ENCODE measurements at regions of chr1 and their contacts with region 1.

Region 1: GRCh38 chr1:27618341-27619082 is 14.6 kb upstream of the AHDC1 start:
- DNase-seq: peak in 7 of 9 donors; percentile 36 to 63 (median 56)
- ATAC-seq: peak; percentile 89
- H3K4me3 ChIP-seq: peak overlapping the region; percentile 36
- H3K4me3 Mint-ChIP-seq: peak overlapping the region; percentile 8 to 74 (median 54)
- H3K27ac ChIP-seq: peak overlapping the region; percentile 58
- H3K27ac Mint-ChIP-seq: peak overlapping the region in 8 of 9 donors; percentile 72 to 93 (median 86)
- H3K4me1 ChIP-seq: peaks cover 51 to 53% of the 10 kb centered on the region in 2 donors
- H3K4me1 Mint-ChIP-seq: peaks cover 47 to 67% (median 56%) of the 10 kb centered on the region in 7 donors
- H3K27me3 ChIP-seq: no peaks in the 10 kb centered on the region
- H3K27me3 Mint-ChIP-seq: peaks cover 0 to 2% (median 0%) of the 10 kb centered on the region in 5 donors

Region 2: DNA sequence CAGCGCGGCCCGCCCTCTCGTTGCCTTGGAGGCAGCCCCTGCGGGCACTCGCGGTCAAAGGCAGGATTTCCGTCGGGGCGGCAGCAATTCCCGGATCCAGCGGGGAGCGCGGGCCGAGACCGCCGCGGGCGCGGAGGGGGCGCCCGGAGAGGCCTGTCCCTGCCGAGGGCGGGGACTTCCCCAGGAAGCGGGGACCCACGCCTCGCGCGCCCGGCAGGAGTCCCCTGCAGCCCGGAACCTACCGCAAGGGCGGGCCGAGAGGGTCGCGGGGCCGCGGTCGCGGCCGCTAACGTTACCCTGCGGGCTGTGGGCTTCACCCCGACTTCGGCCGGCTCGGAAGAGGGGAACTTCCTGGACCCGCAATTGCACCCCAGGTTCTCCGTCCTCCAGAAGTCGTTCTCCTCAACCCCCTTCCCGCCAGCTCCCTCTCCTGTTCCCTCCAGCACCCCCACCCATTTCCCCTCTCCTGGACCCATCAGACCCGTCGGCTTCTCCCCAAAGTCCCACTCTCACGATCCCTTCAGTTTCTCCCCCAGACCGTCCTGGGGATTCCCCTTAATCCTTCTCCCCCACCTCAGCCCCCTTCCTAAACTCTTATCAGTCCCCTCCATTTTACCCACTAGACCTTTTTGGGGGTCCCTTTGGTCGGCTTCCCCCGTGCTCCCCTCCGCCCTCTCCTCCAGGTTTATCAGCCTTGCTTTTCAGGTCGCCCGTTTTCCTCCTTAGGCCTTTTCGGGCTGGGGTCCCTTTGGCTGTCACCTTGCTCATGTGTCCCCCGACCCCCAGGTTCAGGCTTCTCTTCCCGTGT is 15.9 kb after region 1 on chr1:
- CTCF ChIA-PET with region 1: no interaction called
- POLR2A ChIA-PET with region 1: interaction called, 11 read pairs
- intact Hi-C with region 1: loop called (anchors 1 kb)
- DNase-seq: peak in 6 of 9 donors; percentile 27 to 79 (median 34)
- ATAC-seq: peak; percentile 27
- H3K4me3 ChIP-seq: peak overlapping the region; percentile 50
- H3K4me3 Mint-ChIP-seq: peak overlapping the region; percentile 36 to 82 (median 74)
- H3K27ac ChIP-seq: peak overlapping the region; percentile 51
- H3K27ac Mint-ChIP-seq: peak overlapping the region; percentile 27 to 84 (median 60)
- H3K4me1 ChIP-seq: peaks cover 38 to 52% of the 10 kb centered on the region in 2 donors
- H3K4me1 Mint-ChIP-seq: peaks cover 43 to 81% (median 69%) of the 10 kb centered on the region in 7 donors
- H3K27me3 ChIP-seq: no peaks in the 10 kb centered on the region
- H3K27me3 Mint-ChIP-seq: no peaks in the 10 kb centered on the region

Region 3: GRCh38 chr1:27643701-27644625 is 25.5 kb after region 1 on chr1:
- CTCF ChIA-PET with region 1: interaction called, 10 read pairs
- POLR2A ChIA-PET with region 1: interaction called, 4 read pairs
- intact Hi-C with region 1: no loop called
- DNase-seq: peak in 8 of 9 donors; percentile 54 to 79 (median 67)
- ATAC-seq: peak; percentile 98
- H3K4me3 ChIP-seq: no peak overlapping the region
- H3K4me3 Mint-ChIP-seq: peak overlapping the region in 4 of 10 donors; percentile 7 to 34 (median 28)
- H3K27ac ChIP-seq: no peak overlapping the region
- H3K27ac Mint-ChIP-seq: peak overlapping the region; percentile 38 to 85 (median 64)
- H3K4me1 ChIP-seq: peaks cover 11 to 12% of the 10 kb centered on the region in 2 donors
- H3K4me1 Mint-ChIP-seq: peaks cover 4 to 38% (median 23%) of the 10 kb centered on the region in 7 donors
- H3K27me3 ChIP-seq: no peaks in the 10 kb centered on the region
- H3K27me3 Mint-ChIP-seq: no peaks in the 10 kb centered on the region

Measured in naive thymus-derived CD4-positive, alpha-beta T cell (primary cell).